Heart left ventricle (tissue), 16 donors: ENCODE measurements at regions of chr3 and their contacts with region 1.

Region 1: GRCh38 chr3:117977504-117978228 is 1057.0 kb downstream of the IGSF11 start:
- DNase-seq: no peak
- ATAC-seq: no peak
- H3K4me3 ChIP-seq: no peak overlapping the region
- H3K27ac ChIP-seq: no peak overlapping the region
- H3K4me1 ChIP-seq: no peaks in the 10 kb centered on the region
- H3K27me3 ChIP-seq: no peaks in the 10 kb centered on the region
- CTCF ChIP-seq: no peak
- POLR2A ChIP-seq: no peak

Region 2: GRCh38 chr3:117486719-117487716 is 490.6 kb before region 1 on chr3:
- intact Hi-C with region 1: no loop called
- DNase-seq: no peak
- ATAC-seq: no peak
- H3K4me3 ChIP-seq: no peak overlapping the region
- H3K27ac ChIP-seq: no peak overlapping the region
- H3K4me1 ChIP-seq: no peaks in the 10 kb centered on the region
- H3K27me3 ChIP-seq: no peaks in the 10 kb centered on the region
- CTCF ChIP-seq: no peak
- POLR2A ChIP-seq: no peak

Region 3: DNA sequence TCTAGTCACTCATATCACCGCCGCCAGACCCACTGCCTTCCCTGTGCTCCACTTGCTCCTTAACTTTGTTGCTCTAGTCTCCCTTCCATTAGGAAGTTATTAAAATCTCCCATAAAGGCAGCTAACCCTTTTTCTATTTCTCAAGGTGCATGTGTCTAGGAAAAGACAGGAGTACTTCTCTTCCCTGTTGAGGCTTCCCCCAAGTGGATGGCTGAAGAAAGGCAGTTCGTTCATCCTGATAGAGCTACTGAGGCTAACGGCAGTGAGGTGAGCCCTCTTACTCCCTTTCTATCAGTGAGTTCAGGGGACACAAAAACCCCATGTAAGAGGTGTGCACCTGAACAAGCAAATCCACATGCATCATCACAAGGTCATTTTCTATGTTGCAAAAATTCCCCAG is 659.2 kb after region 1 on chr3:
- intact Hi-C with region 1: loop called in 1 of 10 experiments (anchors 5 kb)
- DNase-seq: no peak
- ATAC-seq: no peak
- H3K4me3 ChIP-seq: no peak overlapping the region
- H3K27ac ChIP-seq: no peak overlapping the region
- H3K4me1 ChIP-seq: no peaks in the 10 kb centered on the region
- H3K27me3 ChIP-seq: peaks cover 0 to 19% (median 0%) of the 10 kb centered on the region in 9 donors
- CTCF ChIP-seq: no peak
- POLR2A ChIP-seq: no peak